ENCODE measurements at regions of chr9 and their contacts with region 1.

Region 1: DNA sequence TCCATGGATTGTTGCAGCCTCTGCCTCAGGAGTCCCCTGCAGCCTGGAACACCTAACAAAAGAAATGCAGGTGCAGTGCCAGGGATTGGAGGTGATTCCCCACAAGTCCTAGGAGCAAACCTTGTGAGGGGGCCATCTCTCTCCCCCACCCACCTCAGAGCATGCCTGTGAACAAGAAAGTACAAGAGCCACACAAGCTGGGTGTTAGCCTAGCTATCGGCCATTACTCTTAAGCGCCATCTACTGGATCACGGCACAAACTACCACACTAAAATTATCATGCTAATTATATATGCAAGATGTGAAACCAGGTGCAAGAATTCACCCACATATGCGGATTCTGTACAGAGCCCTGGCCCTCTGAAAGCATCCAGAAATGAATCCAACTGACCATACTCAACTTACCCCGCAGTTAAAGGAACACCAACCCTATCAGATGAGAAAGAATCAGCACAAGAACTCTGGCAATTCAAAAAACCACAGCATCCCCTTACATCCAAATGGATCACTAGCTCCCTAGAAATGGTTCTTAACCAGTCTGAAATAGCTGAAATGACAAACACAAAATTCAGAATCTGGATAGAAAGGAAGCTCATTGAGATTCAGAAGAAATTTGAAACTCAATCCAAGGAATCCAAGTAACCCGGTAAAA is 16.5 kb upstream of the PRSS3 start:
- DNase-seq: peak; percentile 25 to 58
- H3K4me3 ChIP-seq: no peak overlapping the region
- H3K27ac ChIP-seq: no peak overlapping the region
- H3K4me1 ChIP-seq: no peaks in the 10 kb centered on the region
- H3K27me3 ChIP-seq: no peaks in the 10 kb centered on the region
- CTCF ChIP-seq: peak in 2 of 3 experiments; percentile 77 to 81; a peak in 3 of 4 replicates
- EP300 ChIP-seq: no peak
- POLR2A ChIP-seq: no peak
- RAD21 ChIP-seq: peak; percentile 50 to 64

Region 2: GRCh38 chr9:33489066-33489465 is 289.8 kb before region 1 on chr9:
- CTCF ChIA-PET with region 1: no interaction called
- POLR2A ChIA-PET with region 1: no interaction called
- DNase-seq: no peak
- H3K4me3 ChIP-seq: no peak overlapping the region
- H3K27ac ChIP-seq: no peak overlapping the region
- H3K4me1 ChIP-seq: no peaks in the 10 kb centered on the region
- H3K27me3 ChIP-seq: no peaks in the 10 kb centered on the region
- CTCF ChIP-seq: no peak
- EP300 ChIP-seq: no peak
- POLR2A ChIP-seq: no peak
- RAD21 ChIP-seq: no peak

Region 3: DNA sequence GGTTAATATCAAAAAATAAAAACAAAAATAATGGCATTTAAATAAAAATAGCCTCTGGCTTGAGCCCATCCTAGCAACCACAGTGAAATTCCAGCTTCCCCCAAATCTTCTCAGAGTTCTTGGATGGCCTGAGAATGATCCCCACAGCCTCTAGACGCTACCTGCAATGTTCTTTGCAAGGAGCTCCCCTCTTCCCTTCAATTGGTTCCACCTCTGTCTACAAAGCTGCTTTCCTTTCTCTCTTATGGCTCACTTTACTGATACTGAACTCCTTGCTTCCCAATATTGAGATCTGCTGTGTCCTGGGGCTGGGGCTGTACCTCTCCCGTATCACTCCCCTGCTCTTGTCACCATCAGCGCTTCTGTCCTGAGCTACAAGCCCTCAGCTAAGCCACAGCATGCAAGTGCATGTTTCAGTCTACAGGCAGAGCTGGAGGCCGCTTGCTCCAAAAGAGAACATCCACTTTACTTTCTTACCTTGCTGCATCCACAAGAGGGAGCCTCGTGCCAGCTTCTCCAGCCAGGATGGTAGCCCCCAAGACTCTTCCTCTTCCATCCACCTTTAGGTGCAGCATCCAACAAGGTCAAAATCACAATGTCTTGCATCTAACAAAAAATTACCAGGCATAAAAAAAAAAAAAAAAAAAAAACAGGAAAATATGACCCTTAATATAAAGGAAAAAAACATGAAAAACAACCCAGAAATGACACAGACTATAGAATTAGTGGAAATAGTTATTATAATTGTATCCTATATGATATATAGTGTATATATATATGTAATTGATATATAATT is 40.8 kb before region 1 on chr9:
- CTCF ChIA-PET with region 1: interaction called, 26 read pairs
- POLR2A ChIA-PET with region 1: no interaction called
- DNase-seq: peak in 1 of 2 experiments; percentile 65
- H3K4me3 ChIP-seq: no peak overlapping the region
- H3K27ac ChIP-seq: no peak overlapping the region
- H3K4me1 ChIP-seq: no peaks in the 10 kb centered on the region
- H3K27me3 ChIP-seq: no peaks in the 10 kb centered on the region
- CTCF ChIP-seq: peak; percentile 57 to 96 (median 83)
- EP300 ChIP-seq: no peak
- POLR2A ChIP-seq: no peak
- RAD21 ChIP-seq: peak; percentile 82 to 86

Region 4: GRCh38 chr9:33750307-33750838 is 28.5 kb before region 1 on chr9:
- CTCF ChIA-PET with region 1: interaction called, 13 read pairs
- POLR2A ChIA-PET with region 1: no interaction called
- DNase-seq: no peak
- H3K4me3 ChIP-seq: no peak overlapping the region
- H3K27ac ChIP-seq: no peak overlapping the region
- H3K4me1 ChIP-seq: no peaks in the 10 kb centered on the region
- H3K27me3 ChIP-seq: no peaks in the 10 kb centered on the region; a peak in 1 of 7 replicates
- CTCF ChIP-seq: no peak
- EP300 ChIP-seq: no peak
- POLR2A ChIP-seq: no peak
- RAD21 ChIP-seq: no peak

Region 5: GRCh38 chr9:33791117-33791516 is 12.3 kb after region 1 on chr9:
- CTCF ChIA-PET with region 1: interaction called, 39 read pairs
- POLR2A ChIA-PET with region 1: no interaction called
- DNase-seq: no peak
- H3K4me3 ChIP-seq: no peak overlapping the region
- H3K27ac ChIP-seq: no peak overlapping the region
- H3K4me1 ChIP-seq: peaks cover 0 to 5% (median 3%) of the 10 kb centered on the region in 4 experiments; a peak in 4 of 7 replicates
- H3K27me3 ChIP-seq: no peaks in the 10 kb centered on the region
- CTCF ChIP-seq: no peak
- EP300 ChIP-seq: no peak
- POLR2A ChIP-seq: no peak
- RAD21 ChIP-seq: no peak

Region 6: DNA sequence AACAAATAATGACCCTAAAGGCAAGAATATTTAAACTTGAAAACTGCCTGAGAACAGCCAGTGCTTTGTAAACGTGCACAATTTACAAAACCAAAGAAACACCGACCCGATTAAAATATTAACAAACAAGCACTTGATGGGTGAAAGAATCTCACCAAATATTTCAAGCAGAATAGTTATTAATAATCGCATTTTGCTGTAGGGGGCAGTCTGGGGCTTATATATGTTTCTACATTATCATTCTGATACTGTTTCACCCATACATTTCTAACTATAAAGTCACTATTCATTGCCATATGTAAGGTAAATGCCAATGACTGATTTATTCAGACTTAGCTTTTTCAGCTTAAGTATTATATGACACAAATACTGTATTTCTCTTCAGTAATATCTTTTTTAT is 232.2 kb after region 1 on chr9:
- CTCF ChIA-PET with region 1: no interaction called
- POLR2A ChIA-PET with region 1: no interaction called
- DNase-seq: no peak
- H3K4me3 ChIP-seq: no peak overlapping the region
- H3K27ac ChIP-seq: no peak overlapping the region
- H3K4me1 ChIP-seq: no peaks in the 10 kb centered on the region
- H3K27me3 ChIP-seq: no peaks in the 10 kb centered on the region
- CTCF ChIP-seq: no peak
- EP300 ChIP-seq: no peak
- POLR2A ChIP-seq: no peak
- RAD21 ChIP-seq: 0 out of 4 replicates have a peak, but pooled peaks of 1 of the 2 experiments have one; percentile 4

Region 7: DNA sequence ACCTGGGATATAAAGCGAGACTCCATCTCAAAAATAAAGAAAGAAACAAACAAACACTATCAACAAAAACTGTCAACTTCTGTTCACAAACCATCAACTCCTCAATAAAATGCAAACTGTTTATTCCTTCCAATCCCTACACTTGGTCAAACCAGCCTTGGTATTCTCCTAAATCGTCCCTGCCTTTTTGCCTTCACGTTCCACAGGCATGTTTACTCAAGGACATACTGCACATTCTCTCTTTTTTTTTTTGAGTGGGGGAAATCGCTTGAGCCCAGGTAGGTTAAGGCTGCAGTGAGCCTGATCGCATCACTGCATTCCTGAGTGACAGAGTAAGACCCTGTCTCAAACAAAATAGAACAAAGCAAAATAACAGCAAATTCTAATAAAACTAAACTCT is 256.8 kb after region 1 on chr9:
- CTCF ChIA-PET with region 1: no interaction called
- POLR2A ChIA-PET with region 1: no interaction called
- DNase-seq: no peak
- H3K4me3 ChIP-seq: no peak overlapping the region
- H3K27ac ChIP-seq: no peak overlapping the region
- H3K4me1 ChIP-seq: no peaks in the 10 kb centered on the region
- H3K27me3 ChIP-seq: no peaks in the 10 kb centered on the region
- CTCF ChIP-seq: no peak
- EP300 ChIP-seq: no peak
- POLR2A ChIP-seq: no peak
- RAD21 ChIP-seq: no peak